Esophagus squamous epithelium (tissue), 5 donors: ENCODE measurements at regions of chr18 and their contacts with region 1.

Region 1: DNA sequence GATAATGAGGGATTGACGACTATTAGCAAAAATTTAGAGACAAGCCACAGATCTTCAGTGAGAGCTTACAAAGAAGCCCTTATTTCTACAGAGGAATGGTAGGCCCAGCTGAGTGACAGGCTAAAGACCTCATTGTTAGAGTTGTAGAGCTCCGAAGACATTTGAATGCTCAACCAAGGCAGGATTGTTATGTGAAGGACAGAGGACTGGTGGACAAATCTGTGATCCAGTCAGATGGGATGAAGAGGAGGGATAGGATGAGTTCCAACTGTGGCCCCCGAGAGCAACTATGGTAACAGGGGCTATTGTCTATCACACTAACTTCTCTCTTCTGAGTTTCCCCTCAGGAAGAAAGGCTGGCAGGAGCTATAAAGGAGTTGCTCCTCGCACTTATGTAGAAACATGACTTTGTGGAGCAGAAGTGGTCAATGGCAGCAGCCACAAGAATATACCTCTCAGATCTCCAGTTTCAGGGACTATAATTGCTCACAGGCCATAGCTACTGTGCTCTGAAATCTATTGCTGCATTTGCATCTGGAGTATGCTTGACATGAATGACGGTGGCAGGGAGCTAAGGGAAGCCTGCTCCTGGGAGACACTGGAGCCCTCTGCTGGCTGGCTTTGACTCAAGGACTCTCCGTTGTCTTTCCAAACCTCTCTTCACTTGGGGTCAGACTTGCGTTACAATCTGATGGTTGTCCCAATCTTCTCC is 50.3 kb upstream of the GREB1L start:
- DNase-seq: no peak
- H3K4me3 ChIP-seq: no peak overlapping the region
- H3K27ac ChIP-seq: no peak overlapping the region
- H3K4me1 ChIP-seq: no peaks in the 10 kb centered on the region
- H3K27me3 ChIP-seq: peaks cover 0 to 12% (median 0%) of the 10 kb centered on the region in 4 donors
- CTCF ChIP-seq: peak in 3 of 6 experiments; percentile 34 to 51 (median 44)
- POLR2A ChIP-seq: no peak

Region 2: GRCh38 chr18:20975077-20975476 is 216.7 kb before region 1 on chr18:
- intact Hi-C with region 1: no loop called
- DNase-seq: no peak
- H3K4me3 ChIP-seq: no peak overlapping the region
- H3K27ac ChIP-seq: no peak overlapping the region
- H3K4me1 ChIP-seq: no peaks in the 10 kb centered on the region
- H3K27me3 ChIP-seq: no peaks in the 10 kb centered on the region
- CTCF ChIP-seq: no peak
- POLR2A ChIP-seq: no peak

Region 3: DNA sequence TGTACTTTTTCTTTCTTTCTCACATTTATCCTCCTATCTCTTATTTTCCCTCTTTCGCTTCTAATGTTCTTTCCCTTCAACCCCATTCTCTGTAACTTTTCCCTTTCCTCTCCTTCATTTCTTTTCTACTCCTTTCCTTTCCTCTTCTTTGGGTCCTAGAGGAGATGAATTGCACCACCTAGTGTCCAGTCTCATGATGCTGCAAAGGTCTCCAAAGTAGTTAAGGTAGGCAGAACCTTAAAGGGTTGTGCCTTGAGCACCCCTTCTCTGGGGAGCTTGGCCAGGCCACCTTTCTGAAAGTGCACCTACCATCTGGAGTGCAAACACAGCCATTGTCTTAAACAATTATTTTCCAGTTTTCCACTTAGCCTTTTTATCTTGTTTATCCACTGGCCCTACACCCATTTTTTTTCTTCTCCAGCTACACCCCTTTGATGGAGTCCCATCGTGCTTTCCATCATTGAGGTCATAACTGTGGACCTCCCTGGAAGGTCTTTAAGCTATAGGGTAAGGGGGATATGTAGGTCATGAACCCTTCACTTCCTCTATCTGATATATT is 252.8 kb after region 1 on chr18:
- intact Hi-C with region 1: loop called (anchors 10 kb)
- DNase-seq: no peak
- H3K4me3 ChIP-seq: no peak overlapping the region
- H3K27ac ChIP-seq: no peak overlapping the region
- H3K4me1 ChIP-seq: no peaks in the 10 kb centered on the region
- H3K27me3 ChIP-seq: peaks cover 0 to 5% (median 0%) of the 10 kb centered on the region in 4 donors
- CTCF ChIP-seq: peak in 3 of 6 experiments; percentile 25 to 51 (median 43)
- POLR2A ChIP-seq: no peak

Region 4: GRCh38 chr18:21513292-21513691 is 321.5 kb after region 1 on chr18:
- intact Hi-C with region 1: no loop called
- DNase-seq: no peak
- H3K4me3 ChIP-seq: no peak overlapping the region
- H3K27ac ChIP-seq: no peak overlapping the region
- H3K4me1 ChIP-seq: no peaks in the 10 kb centered on the region
- H3K27me3 ChIP-seq: no peaks in the 10 kb centered on the region
- CTCF ChIP-seq: no peak
- POLR2A ChIP-seq: no peak

Region 5: GRCh38 chr18:21960189-21960588 is 768.4 kb after region 1 on chr18:
- intact Hi-C with region 1: loop called (anchors 10 kb)
- DNase-seq: no peak
- H3K4me3 ChIP-seq: no peak overlapping the region
- H3K27ac ChIP-seq: no peak overlapping the region
- H3K4me1 ChIP-seq: no peaks in the 10 kb centered on the region
- H3K27me3 ChIP-seq: peaks cover 0 to 7% (median 0%) of the 10 kb centered on the region in 4 donors
- CTCF ChIP-seq: no peak
- POLR2A ChIP-seq: no peak